PC-3 (cell line): ENCODE measurements at regions of chrX and their contacts with region 1.

Region 1: DNA sequence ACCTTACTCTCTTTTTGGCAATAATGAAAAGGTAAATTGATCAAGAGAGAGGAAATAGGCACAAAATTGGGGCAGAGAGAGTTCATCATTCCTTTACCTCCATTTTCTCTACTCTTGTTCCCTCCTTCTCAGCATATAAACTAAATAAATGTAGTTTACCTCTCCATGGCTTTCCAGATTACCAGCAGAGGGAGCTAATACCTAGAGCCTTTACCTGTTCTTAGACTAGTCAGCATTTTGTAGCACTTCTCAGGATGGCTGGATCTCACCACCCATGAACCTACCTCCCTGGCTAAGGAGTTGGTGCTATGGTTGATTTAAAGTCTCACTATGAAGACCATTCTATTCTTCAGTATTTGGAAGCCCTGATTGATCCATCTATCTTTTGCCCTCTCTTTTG is 15.7 kb downstream of the OFD1 start:
- DNase-seq: peak; percentile 78
- ATAC-seq: peak; percentile 71
- H3K4me3 ChIP-seq: no peak overlapping the region
- H3K27ac ChIP-seq: 0 out of 2 replicates have a peak overlapping the region, but pooled peaks have one; percentile 98
- H3K4me1 ChIP-seq: peaks cover 26% of the 10 kb centered on the region
- H3K27me3 ChIP-seq: no peaks in the 10 kb centered on the region
- CTCF ChIP-seq: peak; percentile 73

Region 2: GRCh38 chrX:13506574-13506973 is 243.6 kb before region 1 on chrX:
- CTCF ChIA-PET with region 1: no interaction called
- POLR2A ChIA-PET with region 1: no interaction called
- intact Hi-C with region 1: loop called (anchors 2 kb)
- DNase-seq: peak; percentile 62
- ATAC-seq: no peak
- H3K4me3 ChIP-seq: no peak overlapping the region
- H3K27ac ChIP-seq: no peak overlapping the region
- H3K4me1 ChIP-seq: no peaks in the 10 kb centered on the region
- H3K27me3 ChIP-seq: no peaks in the 10 kb centered on the region
- CTCF ChIP-seq: peak; percentile 76

Region 3: GRCh38 chrX:13658602-13659001 is 91.6 kb before region 1 on chrX:
- CTCF ChIA-PET with region 1: no interaction called
- POLR2A ChIA-PET with region 1: no interaction called
- intact Hi-C with region 1: loop called (anchors 1 kb)
- DNase-seq: peak; percentile 75
- ATAC-seq: peak; percentile 59; the same call in 1 of the 2 replicates
- H3K4me3 ChIP-seq: peak overlapping the region; percentile 43; the same call in 1 of the 2 replicates
- H3K27ac ChIP-seq: 0 out of 2 replicates have a peak overlapping the region, but pooled peaks have one; percentile 2
- H3K4me1 ChIP-seq: peaks cover 17% of the 10 kb centered on the region
- H3K27me3 ChIP-seq: no peaks in the 10 kb centered on the region
- CTCF ChIP-seq: peak; percentile 84

Region 4: DNA sequence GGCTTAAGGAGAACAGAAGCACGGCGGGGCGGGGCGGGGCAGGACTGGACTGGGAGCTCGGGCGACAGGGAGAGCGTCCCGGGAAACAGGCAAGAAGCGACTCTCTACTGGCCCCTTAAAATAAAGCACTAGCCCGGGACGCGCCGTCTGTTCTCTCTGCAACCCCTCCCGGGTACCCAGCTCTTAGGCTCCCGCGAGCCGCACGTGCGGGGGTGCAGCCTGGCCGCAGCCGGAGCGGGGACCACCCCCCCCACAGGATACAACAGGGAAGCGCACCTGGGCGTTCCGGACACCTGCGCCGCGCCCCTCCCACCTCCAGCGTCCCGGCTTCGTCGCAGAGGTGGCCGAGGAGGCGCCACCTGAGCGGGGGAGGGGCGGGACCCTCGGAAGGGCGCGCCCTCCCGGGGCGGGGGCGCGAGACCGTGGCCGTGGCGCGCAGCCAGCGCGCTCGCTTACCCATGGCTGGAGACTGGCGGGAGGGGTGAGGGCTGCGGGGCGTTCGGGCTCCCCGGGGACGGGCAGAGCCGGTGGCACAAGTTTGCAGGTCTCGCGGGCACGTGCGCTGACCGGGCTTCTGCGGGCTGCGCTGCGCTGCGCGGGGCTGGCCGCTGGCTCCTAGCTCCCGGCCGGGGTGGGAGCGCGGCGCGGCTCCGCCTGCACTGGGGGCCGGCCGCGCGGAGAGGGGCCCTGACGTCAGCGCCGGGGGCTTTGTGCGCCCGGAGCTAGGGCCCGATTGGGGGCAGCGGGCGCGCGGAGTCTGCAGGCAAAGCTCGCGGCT is 188.0 kb after region 1 on chrX:
- CTCF ChIA-PET with region 1: no interaction called
- POLR2A ChIA-PET with region 1: no interaction called
- intact Hi-C with region 1: loop called (anchors 10 kb)
- DNase-seq: peak; percentile 10
- ATAC-seq: peak; percentile 68
- H3K4me3 ChIP-seq: peak overlapping the region; percentile 74
- H3K27ac ChIP-seq: no peak overlapping the region
- H3K4me1 ChIP-seq: peaks cover 15% of the 10 kb centered on the region
- H3K27me3 ChIP-seq: peaks cover 11% of the 10 kb centered on the region; the same call in 1 of the 2 replicates
- CTCF ChIP-seq: no peak

Region 5: GRCh38 chrX:14039344-14039743 is 289.1 kb after region 1 on chrX:
- CTCF ChIA-PET with region 1: no interaction called
- POLR2A ChIA-PET with region 1: no interaction called
- intact Hi-C with region 1: no loop called
- DNase-seq: peak; percentile 76
- ATAC-seq: peak; percentile 83
- H3K4me3 ChIP-seq: no peak overlapping the region
- H3K27ac ChIP-seq: no peak overlapping the region
- H3K4me1 ChIP-seq: no peaks in the 10 kb centered on the region
- H3K27me3 ChIP-seq: no peaks in the 10 kb centered on the region
- CTCF ChIP-seq: peak; percentile 76